Cardiac septum (tissue), 1 donor: ENCODE measurements at regions of chr18 and their contacts with region 1.

Region 1: DNA sequence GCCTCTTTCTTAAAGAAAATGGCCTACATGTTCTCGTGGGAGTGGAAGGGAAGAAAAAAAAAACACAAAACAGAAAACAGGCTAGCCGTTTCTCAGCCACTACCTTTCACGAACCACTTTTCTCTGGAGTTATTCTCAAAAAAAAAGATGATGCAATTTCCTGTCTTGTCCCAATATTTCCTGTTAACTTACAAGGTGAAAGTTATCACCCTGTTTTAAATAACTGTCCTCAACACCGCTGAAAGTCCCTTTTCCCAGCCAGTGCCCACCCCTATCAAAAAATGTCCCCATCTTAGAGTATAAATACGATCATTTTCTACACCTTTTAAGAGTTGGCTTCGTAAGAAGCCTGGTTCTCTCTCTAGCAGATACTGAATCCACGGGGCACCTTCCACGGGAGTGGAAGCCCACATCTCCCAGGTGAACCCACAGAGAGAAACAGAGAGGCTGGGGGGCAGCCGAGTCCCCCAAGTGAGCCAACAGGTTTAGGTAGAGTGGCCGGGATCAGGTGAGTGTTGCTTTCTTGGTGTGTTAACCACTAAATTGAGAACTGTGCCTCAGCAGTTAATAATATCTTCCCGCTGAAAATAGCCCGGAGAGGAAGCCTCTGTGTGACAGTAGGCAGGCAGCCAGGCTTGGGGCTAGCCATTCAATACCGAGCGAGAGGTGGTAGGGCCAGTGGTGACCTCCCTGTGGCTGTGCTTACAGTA is 15.9 kb downstream of the SMAD7 start:
- DNase-seq: peak; percentile 91

Region 2: DNA sequence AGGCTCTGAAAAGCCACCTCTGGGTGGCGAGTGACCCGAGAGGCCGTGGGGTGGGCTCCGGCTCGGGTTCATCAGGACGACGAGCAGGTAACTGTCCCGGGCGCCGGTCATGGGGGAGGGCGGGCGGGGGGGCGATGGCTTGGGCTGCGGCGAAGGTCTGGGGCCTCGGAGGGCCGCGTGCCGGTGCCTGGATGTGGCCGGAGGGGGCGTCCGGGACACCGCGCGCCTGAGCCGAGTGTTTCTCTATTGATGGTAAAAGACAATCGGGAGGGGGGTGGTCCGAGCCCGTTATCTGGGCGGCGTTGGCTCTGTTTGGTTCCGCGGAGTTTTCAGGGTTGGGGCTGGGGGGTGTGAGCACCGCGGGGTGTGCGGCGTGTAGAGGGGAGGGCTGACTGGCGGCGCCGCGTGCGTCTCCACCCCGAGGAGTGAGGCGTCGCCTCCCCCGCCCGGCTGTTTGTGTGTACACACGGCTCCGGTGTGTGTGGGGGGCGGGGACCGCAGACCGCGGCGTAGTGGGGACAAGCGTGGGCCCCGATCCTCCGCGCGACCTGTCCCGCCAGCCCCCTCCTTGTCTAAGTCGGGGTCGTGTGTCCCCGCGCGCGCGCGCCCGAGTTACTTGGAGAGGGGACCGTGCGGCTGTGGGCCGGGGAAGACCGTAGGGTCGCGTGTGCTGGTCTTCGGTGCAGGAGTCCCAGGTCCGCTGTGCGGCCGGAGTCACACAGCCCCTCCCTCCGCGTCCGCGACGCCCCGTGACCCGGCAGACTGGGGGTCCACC is 394.4 kb before region 1 on chr18:
- intact Hi-C with region 1: loop called (anchors 10 kb)
- DNase-seq: peak; percentile 92

Region 3: DNA sequence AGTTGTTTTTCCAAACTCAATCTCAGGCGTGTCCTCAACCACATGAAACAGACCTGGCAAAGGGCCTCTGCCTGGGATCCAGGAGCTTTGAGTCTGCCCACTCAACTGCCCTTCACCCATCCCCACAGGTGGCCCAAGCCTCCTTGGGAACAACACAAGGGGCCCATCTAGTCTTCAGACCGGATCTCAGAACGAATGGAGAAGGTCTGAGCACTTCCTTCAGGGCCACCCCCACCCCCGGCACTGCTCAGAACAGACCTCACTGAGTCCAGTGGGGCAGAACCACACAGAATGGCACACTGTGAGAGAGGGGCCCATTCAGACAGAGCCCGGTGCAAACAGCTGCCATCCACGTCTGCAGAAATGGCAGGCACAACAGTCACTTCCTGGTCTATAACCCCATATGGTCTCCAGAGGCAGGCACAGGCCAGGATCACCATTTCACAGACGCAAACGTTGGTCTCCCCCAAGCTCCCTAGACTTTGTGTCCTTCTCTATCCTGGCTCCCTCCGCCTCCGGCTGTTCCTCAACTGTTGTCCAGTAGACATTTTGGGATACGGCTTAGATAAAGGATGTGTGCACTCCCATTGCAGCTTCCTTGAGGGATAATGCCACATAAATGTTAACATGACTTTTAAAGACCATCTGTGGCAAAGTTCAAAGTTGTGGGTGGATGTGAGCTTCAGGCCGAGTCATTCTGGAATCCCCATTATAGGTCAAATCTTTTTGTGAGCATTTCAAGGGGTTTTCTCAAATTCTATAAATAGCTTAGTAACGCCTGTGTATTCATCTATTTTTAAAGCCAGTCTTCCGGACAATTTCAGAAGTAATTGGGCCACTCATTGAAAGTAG is 133.8 kb before region 1 on chr18:
- intact Hi-C with region 1: loop called (anchors 5 kb)
- DNase-seq: peak; percentile 75

Region 4: DNA sequence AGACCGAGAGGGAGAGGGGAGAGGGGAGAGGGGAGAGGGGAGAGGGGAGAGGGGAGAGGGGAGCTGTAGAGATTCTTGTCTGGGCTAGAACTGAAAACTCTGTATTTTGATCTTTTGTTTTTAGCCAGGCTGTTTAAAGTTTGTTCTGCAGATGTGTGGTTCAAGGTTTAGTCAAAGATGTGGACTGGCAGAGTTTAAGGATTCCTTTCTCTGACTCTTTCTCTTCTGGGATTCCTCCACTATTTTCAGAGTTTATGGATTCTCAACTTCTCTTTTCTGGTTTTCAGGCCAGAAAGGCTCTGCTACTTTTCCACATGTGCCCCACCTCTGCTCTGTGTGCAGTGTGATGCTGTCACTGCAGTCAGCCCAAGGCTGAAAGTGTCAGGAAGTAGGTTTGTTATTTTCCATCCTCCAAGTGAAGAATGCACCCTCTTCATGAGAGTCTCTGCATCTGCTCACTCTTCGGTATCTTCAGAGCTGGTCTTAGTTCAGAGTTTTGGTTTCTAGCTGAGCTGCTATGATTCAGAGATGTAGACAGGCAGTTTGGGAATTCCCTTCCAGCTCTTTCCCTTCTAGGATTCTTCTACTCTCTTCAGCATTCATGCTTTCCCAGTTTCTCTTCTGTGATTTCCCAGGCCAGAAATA is 146.8 kb after region 1 on chr18:
- intact Hi-C with region 1: no loop called
- DNase-seq: no peak